CD8-positive, alpha-beta T cell (primary cell): ENCODE measurements at regions of chr1 and their contacts with region 1.

Region 1: GRCh38 chr1:241408170-241408569 is 51.2 kb upstream of the RGS7 start:
- DNase-seq: no peak
- ATAC-seq: no peak
- H3K4me3 ChIP-seq: no peak overlapping the region
- H3K4me3 Mint-ChIP-seq: no peak overlapping the region
- H3K27ac ChIP-seq: no peak overlapping the region
- H3K27ac Mint-ChIP-seq: no peak overlapping the region
- H3K4me1 ChIP-seq: no peaks in the 10 kb centered on the region
- H3K4me1 Mint-ChIP-seq: no peaks in the 10 kb centered on the region
- H3K27me3 ChIP-seq: no peaks in the 10 kb centered on the region
- H3K27me3 Mint-ChIP-seq: peaks cover 11% of the 10 kb centered on the region
- CTCF ChIP-seq: no peak

Region 2: DNA sequence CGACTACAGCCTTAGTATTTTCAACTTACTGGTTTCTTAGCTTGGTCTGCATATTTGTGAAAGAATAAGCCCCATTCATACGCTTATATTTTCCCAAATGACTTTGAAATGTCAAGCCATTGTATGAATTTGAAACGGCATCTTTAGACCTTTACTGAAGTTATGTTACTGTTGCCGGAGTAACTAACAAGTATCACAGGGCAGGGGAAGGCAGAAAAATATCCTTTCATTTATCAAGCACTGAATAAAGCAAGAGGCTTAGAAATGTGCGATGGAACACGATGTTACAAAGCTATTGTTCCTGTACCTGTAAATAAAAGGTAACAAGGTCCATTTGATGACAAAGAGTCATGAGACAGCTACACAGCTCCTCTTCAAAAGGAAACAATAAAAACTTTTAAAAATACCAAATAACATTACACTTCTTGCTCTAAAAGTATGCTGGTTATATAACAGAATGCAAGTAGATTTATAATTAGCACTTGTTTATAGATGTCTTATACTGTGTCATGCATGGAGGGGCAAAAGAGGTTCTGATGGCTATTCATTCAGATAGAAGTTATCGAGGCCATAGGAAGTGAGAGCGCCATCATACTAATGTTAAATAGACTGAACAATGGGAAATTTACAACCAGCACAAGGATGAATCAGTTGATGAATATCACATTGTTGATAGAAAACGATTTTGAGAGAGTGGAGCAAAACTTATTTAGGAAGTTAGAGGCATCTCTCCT is 373.8 kb before region 1 on chr1:
- CTCF ChIA-PET with region 1: no interaction called
- POLR2A ChIA-PET with region 1: no interaction called
- intact Hi-C with region 1: no loop called
- DNase-seq: no peak
- ATAC-seq: no peak
- H3K4me3 ChIP-seq: no peak overlapping the region
- H3K4me3 Mint-ChIP-seq: no peak overlapping the region
- H3K27ac ChIP-seq: no peak overlapping the region
- H3K27ac Mint-ChIP-seq: no peak overlapping the region
- H3K4me1 ChIP-seq: no peaks in the 10 kb centered on the region
- H3K4me1 Mint-ChIP-seq: no peaks in the 10 kb centered on the region
- H3K27me3 ChIP-seq: no peaks in the 10 kb centered on the region
- H3K27me3 Mint-ChIP-seq: no peaks in the 10 kb centered on the region
- CTCF ChIP-seq: no peak

Region 3: GRCh38 chr1:241269116-241269515 is 139.1 kb before region 1 on chr1:
- CTCF ChIA-PET with region 1: no interaction called
- POLR2A ChIA-PET with region 1: no interaction called
- intact Hi-C with region 1: no loop called
- DNase-seq: no peak
- ATAC-seq: no peak
- H3K4me3 ChIP-seq: no peak overlapping the region
- H3K4me3 Mint-ChIP-seq: no peak overlapping the region
- H3K27ac ChIP-seq: no peak overlapping the region
- H3K27ac Mint-ChIP-seq: no peak overlapping the region
- H3K4me1 ChIP-seq: no peaks in the 10 kb centered on the region
- H3K4me1 Mint-ChIP-seq: no peaks in the 10 kb centered on the region
- H3K27me3 ChIP-seq: no peaks in the 10 kb centered on the region
- H3K27me3 Mint-ChIP-seq: no peaks in the 10 kb centered on the region
- CTCF ChIP-seq: no peak

Region 4: GRCh38 chr1:241376701-241377100 is 31.5 kb before region 1 on chr1:
- CTCF ChIA-PET with region 1: no interaction called
- POLR2A ChIA-PET with region 1: no interaction called
- intact Hi-C with region 1: loop called (anchors 1 kb)
- DNase-seq: no peak
- ATAC-seq: no peak
- H3K4me3 ChIP-seq: no peak overlapping the region
- H3K4me3 Mint-ChIP-seq: no peak overlapping the region
- H3K27ac ChIP-seq: no peak overlapping the region
- H3K27ac Mint-ChIP-seq: no peak overlapping the region
- H3K4me1 ChIP-seq: no peaks in the 10 kb centered on the region
- H3K4me1 Mint-ChIP-seq: no peaks in the 10 kb centered on the region
- H3K27me3 ChIP-seq: no peaks in the 10 kb centered on the region
- H3K27me3 Mint-ChIP-seq: no peaks in the 10 kb centered on the region
- CTCF ChIP-seq: no peak

Region 5: DNA sequence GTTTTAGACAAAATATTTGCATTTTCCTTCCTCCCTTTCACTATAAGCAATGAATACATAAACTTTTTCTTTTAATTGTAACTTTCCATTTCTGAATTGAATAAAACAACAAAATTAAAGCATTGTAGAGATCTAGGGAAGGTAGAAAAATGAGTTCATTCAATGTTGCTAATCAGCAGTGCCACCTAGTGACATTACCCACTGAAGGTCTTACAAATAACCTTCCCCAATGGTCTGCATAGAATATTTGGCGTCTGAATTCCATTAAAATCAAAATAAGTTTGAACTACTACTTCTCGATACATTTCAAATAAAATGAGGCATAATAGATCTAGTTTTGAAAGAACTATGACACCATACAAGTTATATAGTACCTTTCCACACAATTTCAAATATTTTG is 91.7 kb after region 1 on chr1:
- CTCF ChIA-PET with region 1: no interaction called
- POLR2A ChIA-PET with region 1: no interaction called
- intact Hi-C with region 1: no loop called
- DNase-seq: no peak
- ATAC-seq: no peak
- H3K4me3 ChIP-seq: no peak overlapping the region
- H3K4me3 Mint-ChIP-seq: no peak overlapping the region
- H3K27ac ChIP-seq: no peak overlapping the region
- H3K27ac Mint-ChIP-seq: no peak overlapping the region
- H3K4me1 ChIP-seq: no peaks in the 10 kb centered on the region
- H3K4me1 Mint-ChIP-seq: no peaks in the 10 kb centered on the region
- H3K27me3 ChIP-seq: no peaks in the 10 kb centered on the region
- H3K27me3 Mint-ChIP-seq: no peaks in the 10 kb centered on the region
- CTCF ChIP-seq: no peak